GM10248 (cell line): ENCODE measurements at regions of chr14 and their contacts with region 1.

Region 1: DNA sequence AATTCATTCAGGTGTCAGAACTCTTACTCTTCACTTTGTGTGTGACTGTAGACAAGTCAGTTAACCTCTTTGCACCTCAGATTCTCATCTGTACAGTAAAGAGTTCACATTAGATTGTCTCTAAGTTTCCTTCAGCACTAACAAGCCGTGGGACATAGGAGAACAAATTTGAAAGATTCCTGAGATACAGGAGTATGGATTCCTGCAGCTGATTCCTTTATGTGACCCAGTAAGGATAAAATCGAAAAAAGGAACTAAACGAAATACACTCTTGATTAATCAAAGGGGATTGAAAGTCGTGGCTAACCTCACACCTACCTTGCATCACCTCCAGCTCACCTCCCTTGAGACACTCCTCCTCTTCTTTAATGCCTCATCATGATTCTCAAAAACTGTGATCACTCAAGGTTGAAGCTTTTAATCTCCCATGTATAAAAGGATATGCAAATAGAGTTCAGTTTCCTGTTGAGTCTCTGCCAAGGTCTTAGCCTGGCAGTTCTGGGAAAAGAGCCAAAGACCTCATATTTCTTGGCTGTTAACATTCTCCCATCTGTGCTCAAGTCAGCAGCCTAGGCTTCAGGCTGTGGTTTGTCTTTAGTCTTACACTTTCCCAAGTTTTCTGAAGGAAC is 156.6 kb downstream of the DAD1 start:
- DNase-seq: no peak
- CTCF ChIP-seq: no peak

Region 2: GRCh38 chr14:21768116-21768874 is 664.2 kb before region 1 on chr14:
- CTCF ChIA-PET with region 1: no interaction called
- POLR2A ChIA-PET with region 1: no interaction called
- DNase-seq: peak; percentile 14
- CTCF ChIP-seq: peak; percentile 21

Region 3: DNA sequence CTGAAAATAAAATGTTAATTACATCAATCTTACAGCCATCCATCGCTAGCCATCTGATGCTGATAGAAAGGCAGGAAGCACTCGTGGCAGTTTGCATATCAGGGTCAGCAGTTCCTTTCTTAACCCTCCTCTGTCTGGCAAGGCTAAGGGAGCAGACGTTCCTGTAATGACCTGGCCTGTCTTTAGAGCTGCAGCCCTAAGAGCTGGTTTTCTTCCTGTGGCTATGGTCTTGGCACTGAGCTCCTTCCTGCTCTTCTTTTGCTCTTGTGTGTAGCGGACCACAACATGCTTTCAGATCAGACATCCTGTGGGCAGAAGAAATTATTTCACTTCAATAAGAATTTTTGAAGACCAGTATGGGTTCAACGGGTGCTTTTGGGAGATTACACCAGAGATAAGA is 13.8 kb before region 1 on chr14:
- CTCF ChIA-PET with region 1: interaction called, 16 read pairs
- POLR2A ChIA-PET with region 1: no interaction called
- DNase-seq: peak; percentile 28
- CTCF ChIP-seq: no peak

Region 4: DNA sequence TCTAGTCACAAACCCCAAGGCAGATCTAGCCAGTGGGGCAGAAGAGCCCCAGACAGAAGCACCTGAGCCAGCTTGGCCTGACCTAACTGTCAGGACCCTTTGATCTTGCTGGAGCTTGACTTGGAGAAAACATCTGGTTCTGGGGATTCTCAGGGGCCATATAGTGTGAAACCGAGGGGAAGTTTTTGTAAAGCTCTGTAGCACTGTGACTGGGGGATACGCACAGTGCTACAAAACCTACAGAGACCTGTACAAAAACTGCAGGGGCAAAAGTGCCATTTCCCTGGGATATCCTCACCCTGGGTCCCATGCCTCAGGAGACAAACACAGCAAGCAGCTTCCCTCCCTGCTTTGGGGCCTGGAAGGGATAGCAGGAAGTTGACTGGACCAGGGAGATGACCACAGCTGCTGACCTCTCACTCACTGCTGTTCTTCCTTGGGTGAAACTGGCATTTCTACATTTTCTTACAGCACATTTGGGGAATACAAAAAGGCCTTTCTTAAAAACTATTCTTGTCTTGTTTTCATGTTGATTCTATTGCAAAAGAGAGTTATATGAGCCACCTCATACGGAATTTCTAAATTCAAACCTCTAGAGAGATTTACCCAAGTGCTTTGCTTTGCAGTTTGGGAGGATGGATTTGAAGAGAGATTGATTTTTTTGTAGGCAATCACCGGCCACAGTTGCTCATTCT is 16.6 kb after region 1 on chr14:
- CTCF ChIA-PET with region 1: interaction called, 22 read pairs
- POLR2A ChIA-PET with region 1: no interaction called
- DNase-seq: peak; percentile 38
- CTCF ChIP-seq: no peak